Activated T-helper 1 cell treated with anti-CD3 and anti-CD28 coated beads, Interleukin-12 subunit alpha, Interleukin-12 subunit beta, Interleukin-2, Interleukin-4 antibody, amounts not matched to agents 30 ng/mL and 10 ng/mL and 1 ng/mL, durations not matched to agents 14 hours and 24 hours and 36 hours (primary cell): ENCODE measurements at regions of chr19 and their contacts with region 1.

Region 1: GRCh38 chr19:55339048-55339888 is at the start of gene KMT5C:
- DNase-seq: peak; percentile 100
- H3K4me3 Mint-ChIP-seq: peak within 1 kb of the TSS; percentile 96
- H3K27ac Mint-ChIP-seq: peak within 1 kb of the TSS; percentile 99
- H3K4me1 Mint-ChIP-seq: peaks cover 14% of the 10 kb centered on the region
- H3K27me3 Mint-ChIP-seq: peaks cover 9% of the 10 kb centered on the region
- total RNA-seq, gene KMT5C: 29.1 and 29.9 TPM in 2 replicates

Region 2: GRCh38 chr19:55053735-55054134 is 285.5 kb before region 1 on chr19:
- intact Hi-C with region 1: no loop called
- DNase-seq: no peak
- H3K4me3 Mint-ChIP-seq: no peak overlapping the region
- H3K27ac Mint-ChIP-seq: no peak overlapping the region
- H3K4me1 Mint-ChIP-seq: no peaks in the 10 kb centered on the region
- H3K27me3 Mint-ChIP-seq: no peaks in the 10 kb centered on the region

Region 3: GRCh38 chr19:55166530-55167268 is 172.6 kb before region 1 on chr19 and contains the start of gene DNAAF3:
- intact Hi-C with region 1: loop called (anchors 1 kb)
- DNase-seq: peak; percentile 76
- H3K4me3 Mint-ChIP-seq: peak within 1 kb of the TSS; percentile 84
- H3K27ac Mint-ChIP-seq: peak within 1 kb of the TSS; percentile 32
- H3K4me1 Mint-ChIP-seq: peaks cover 12% of the 10 kb centered on the region
- H3K27me3 Mint-ChIP-seq: peaks cover 57% of the 10 kb centered on the region
- total RNA-seq, gene DNAAF3: 0.36 TPM in 1 of 2 replicates, not detected in the other

Region 4: DNA sequence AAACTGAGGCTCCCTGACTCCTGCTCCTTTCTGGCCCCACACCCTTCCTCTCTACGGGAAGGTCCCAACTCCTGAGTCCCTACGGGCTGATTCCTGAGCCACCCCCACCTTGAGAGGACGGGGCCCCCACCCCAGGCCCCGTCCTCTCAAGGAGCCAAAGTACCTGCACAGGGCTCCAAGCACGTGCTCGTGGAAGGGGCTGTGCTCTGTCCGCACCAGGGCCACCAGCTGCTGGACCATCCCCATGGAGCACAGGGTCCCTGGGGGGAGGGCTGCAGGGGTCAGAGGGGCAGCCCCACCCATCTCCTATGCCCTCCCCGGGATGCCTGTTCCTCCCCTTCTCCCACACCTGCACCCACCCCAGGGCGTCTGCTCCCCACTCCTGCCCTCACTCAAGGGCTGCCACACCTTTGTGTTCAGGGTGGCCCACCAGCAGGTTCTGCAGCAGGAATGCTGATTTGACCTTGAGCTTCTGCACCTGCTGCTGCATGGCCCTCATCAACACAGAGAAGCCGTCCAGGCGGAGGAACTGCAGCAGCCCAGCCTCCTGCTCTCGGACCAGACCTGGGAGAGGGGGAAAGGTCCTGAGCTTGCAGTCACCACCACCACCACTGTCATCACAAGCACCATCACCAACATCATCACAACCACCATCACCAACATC is 73.4 kb before region 1 on chr19:
- intact Hi-C with region 1: no loop called
- DNase-seq: no peak
- H3K4me3 Mint-ChIP-seq: no peak overlapping the region
- H3K27ac Mint-ChIP-seq: no peak overlapping the region
- H3K4me1 Mint-ChIP-seq: no peaks in the 10 kb centered on the region
- H3K27me3 Mint-ChIP-seq: no peaks in the 10 kb centered on the region

Region 5: GRCh38 chr19:55279770-55280643 is 59.3 kb before region 1 on chr19 and contains the start of gene HSPBP1:
- intact Hi-C with region 1: loop called (anchors 1 kb)
- DNase-seq: peak; percentile 95
- H3K4me3 Mint-ChIP-seq: peak within 1 kb of the TSS; percentile 99
- H3K27ac Mint-ChIP-seq: peak within 1 kb of the TSS; percentile 96
- H3K4me1 Mint-ChIP-seq: peaks cover 51% of the 10 kb centered on the region
- H3K27me3 Mint-ChIP-seq: peaks cover 7% of the 10 kb centered on the region
- total RNA-seq, gene HSPBP1: 66.4 and 69.6 TPM in 2 replicates

Region 6: DNA sequence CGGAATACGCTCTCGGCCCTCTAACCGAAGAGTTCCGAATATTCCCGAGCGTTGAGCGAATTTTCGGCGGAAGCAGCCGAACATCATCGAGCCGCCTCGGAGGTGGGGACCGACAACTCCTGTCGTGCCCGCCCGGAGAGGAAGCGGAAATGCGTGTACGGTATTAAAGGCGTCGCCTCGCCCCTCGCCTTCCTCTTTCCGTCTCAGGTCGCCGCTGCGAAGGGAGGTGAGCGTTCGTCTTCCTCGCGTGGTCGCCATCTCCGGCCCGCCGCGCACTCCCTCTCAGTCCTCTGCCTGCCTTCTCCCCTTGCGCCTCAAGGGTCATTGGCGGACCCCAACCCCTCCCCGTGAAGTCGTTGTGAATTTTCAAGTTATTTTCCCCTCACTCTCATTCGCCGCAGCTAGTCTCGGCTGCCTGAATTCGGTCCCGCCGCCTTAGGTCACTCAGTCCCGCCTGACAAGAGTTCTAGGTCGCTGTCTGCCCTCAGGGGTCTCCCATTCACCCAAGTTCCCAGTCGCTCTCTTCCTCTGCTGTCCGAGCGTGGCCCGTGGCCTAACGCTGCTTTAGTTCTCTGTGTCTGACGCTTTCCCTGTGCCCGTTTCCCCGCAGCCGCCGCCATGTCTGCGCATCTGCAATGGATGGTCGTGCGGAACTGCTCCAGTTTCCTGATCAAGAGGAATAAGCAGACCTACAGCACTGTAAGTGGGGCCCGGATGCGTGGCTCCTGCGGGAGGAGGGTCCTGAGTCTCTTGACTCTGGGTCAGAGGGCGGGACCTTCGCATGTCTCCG is 46.7 kb after region 1 on chr19 and contains the start of gene RPL28:
- intact Hi-C with region 1: loop called (anchors 1 kb)
- DNase-seq: peak; percentile 99
- H3K4me3 Mint-ChIP-seq: peak within 1 kb of the TSS; percentile 99
- H3K27ac Mint-ChIP-seq: peak within 1 kb of the TSS; percentile 96
- H3K4me1 Mint-ChIP-seq: peaks cover 43% of the 10 kb centered on the region
- H3K27me3 Mint-ChIP-seq: no peaks in the 10 kb centered on the region
- total RNA-seq, gene RPL28: 1,835 and 1,847 TPM in 2 replicates

Region 7: DNA sequence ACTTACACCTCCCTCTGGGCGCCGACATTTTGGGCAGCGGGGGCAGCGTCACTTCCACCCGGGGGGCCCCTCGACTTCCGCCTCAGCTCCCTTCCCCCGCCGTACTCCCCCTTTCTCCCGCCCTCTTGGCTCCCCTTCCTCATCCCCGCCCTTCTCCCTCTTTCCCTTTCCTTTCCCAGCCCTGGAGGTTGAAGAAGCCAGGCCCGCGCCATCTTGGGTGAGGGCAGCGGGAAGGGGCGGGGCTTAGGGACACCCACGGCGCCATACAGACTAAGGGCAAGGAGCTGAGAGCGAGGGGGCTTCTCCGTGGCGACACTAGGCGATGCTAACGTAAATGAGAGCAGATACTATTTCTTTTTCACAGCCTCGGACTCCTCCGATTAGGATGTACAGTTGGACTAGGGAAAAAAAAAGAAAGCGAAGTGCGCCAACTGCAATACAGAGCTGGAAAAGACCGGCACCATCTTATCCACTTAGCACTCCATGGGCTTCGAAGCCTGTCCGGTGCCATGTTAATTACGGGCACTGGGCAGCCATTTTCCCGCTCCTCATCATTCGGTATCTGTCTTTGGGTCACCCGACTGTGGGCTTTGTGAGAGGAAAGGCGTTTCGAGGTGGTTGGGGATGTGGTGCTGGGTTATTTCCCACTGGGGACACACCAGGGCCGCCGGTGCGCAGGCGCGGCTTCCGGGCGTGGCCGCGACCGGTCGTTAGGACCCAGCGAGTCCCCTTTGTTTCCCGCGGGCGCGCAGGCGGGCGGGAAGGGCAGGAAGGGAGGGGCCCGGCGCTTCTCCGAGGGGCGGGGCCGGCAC is 260.4 kb after region 1 on chr19 and contains the start of gene FIZ1:
- intact Hi-C with region 1: loop called (anchors 1 kb)
- DNase-seq: peak; percentile 95
- H3K4me3 Mint-ChIP-seq: peak within 1 kb of the TSS; percentile 93
- H3K27ac Mint-ChIP-seq: peak within 1 kb of the TSS; percentile 98
- H3K4me1 Mint-ChIP-seq: peaks cover 28% of the 10 kb centered on the region
- H3K27me3 Mint-ChIP-seq: no peaks in the 10 kb centered on the region
- total RNA-seq, gene FIZ1: 24.2 and 24.7 TPM in 2 replicates